ENCODE measurements at regions of chr2 and their contacts with region 1.

Region 1: DNA sequence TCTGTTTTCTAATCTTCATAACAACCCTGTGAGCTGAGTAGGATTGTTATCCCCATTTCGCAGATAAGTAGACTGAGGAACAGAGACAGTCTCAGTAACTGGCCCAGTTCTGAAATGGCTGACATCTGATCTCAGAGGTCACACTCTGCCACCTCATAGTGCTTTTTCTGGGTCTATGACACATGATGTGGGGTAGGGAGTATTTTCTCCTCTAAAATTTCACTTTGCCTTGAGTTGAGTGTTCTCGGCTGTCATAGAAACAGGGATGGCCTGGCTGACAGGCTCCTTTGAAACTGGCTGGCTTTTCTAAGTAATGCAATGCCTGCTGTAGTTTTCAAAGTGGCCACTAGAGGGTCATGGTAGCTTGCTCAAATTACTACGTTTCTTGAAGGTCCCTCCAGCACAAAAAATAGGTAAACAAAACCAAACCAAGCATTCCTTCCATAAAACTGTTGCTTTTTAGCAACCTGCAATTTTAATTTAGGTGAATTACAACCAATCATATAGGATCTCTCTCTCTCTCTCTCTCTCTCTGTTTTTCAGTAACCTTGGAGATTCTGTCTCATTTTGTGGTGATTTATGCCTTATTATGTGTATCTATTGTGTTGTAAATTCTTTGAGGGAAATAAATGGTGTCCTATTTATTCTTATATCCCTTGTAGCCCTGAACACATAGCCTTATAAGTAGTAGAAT is 84.2 kb upstream of the TTN start:
- DNase-seq: peak; percentile 9 to 65 (median 49)
- ATAC-seq: peak; percentile 83
- H3K4me3 ChIP-seq: no peak overlapping the region
- H3K4me3 Mint-ChIP-seq: no peak overlapping the region
- H3K27ac ChIP-seq: no peak overlapping the region
- H3K27ac Mint-ChIP-seq: no peak overlapping the region
- H3K4me1 ChIP-seq: no peaks in the 10 kb centered on the region
- H3K4me1 Mint-ChIP-seq: peaks cover 5 to 17% (median 7%) of the 10 kb centered on the region in 7 donors
- H3K27me3 ChIP-seq: no peaks in the 10 kb centered on the region
- H3K27me3 Mint-ChIP-seq: no peaks in the 10 kb centered on the region

Region 2: DNA sequence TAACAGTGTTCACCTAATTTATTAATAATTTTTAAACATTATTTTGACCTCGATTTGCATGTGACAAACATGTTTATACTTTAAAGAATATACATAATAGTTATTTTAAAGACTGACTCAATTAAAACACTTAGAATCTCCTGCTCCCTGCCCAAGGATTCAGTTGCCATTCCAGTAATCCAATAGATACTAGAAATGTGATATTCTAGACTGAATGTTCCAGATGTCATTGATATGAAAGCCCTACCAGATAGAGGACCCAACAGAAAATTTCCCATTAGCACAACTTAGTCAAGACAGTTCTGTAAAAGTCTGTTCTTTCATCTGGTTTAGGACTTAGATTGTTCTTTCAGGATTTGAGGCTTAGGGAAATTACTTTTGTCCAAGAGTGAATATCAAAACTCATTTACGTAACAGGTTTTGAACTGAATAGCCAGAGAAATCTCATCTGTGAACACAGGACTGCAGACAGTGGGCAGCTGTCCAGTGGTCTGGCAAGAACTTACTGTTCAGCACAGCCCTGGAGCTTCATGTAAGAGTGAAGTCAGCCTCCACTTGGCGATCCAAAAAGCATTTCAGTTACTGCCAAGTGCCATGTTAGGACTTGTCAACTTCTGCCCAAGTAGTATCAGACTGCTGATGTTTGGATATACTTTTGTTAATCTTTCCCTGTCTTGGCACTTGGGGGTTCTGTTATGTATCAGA is 619.6 kb before region 1 on chr2:
- CTCF ChIA-PET with region 1: no interaction called
- POLR2A ChIA-PET with region 1: no interaction called
- intact Hi-C with region 1: no loop called
- DNase-seq: no peak
- ATAC-seq: no peak
- H3K4me3 ChIP-seq: no peak overlapping the region
- H3K4me3 Mint-ChIP-seq: no peak overlapping the region
- H3K27ac ChIP-seq: no peak overlapping the region
- H3K27ac Mint-ChIP-seq: no peak overlapping the region
- H3K4me1 ChIP-seq: no peaks in the 10 kb centered on the region
- H3K4me1 Mint-ChIP-seq: no peaks in the 10 kb centered on the region
- H3K27me3 ChIP-seq: no peaks in the 10 kb centered on the region
- H3K27me3 Mint-ChIP-seq: peaks cover 7 to 14% (median 9%) of the 10 kb centered on the region in 5 donors

Region 3: DNA sequence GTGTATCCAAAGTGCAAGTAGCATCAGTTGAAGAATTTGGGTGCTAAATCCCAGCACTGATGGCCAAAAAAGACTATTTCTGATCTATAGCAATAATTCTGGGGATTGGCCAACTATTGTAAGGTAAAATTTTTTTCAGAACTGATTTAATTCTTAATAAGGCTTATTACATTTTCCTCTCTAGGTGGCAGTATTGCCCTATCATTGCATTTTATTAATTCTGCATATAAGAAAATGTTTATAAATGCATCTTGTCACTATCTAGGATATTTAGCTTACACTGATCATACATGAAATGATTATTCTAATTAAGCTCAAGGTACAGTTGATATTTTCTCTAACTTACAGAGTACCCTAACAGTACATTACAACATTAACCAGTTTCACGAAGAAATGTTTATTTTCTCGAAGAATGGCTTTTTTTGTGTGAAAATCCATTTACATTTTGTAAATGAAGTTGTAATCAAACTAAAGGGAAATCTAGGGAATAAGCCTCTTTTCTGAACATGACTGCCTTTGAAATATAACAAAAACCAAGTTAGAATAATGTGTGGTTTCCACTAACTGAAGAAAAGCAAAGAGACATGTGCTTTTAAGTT is 95.2 kb before region 1 on chr2:
- CTCF ChIA-PET with region 1: interaction called, 3 read pairs
- POLR2A ChIA-PET with region 1: no interaction called
- intact Hi-C with region 1: loop called in 1 of 2 experiments (anchors 5 kb)
- DNase-seq: peak in 5 of 9 donors; percentile 27 to 33 (median 28)
- ATAC-seq: no peak
- H3K4me3 ChIP-seq: no peak overlapping the region
- H3K4me3 Mint-ChIP-seq: no peak overlapping the region
- H3K27ac ChIP-seq: no peak overlapping the region
- H3K27ac Mint-ChIP-seq: no peak overlapping the region
- H3K4me1 ChIP-seq: no peaks in the 10 kb centered on the region
- H3K4me1 Mint-ChIP-seq: no peaks in the 10 kb centered on the region
- H3K27me3 ChIP-seq: no peaks in the 10 kb centered on the region
- H3K27me3 Mint-ChIP-seq: no peaks in the 10 kb centered on the region

Region 4: DNA sequence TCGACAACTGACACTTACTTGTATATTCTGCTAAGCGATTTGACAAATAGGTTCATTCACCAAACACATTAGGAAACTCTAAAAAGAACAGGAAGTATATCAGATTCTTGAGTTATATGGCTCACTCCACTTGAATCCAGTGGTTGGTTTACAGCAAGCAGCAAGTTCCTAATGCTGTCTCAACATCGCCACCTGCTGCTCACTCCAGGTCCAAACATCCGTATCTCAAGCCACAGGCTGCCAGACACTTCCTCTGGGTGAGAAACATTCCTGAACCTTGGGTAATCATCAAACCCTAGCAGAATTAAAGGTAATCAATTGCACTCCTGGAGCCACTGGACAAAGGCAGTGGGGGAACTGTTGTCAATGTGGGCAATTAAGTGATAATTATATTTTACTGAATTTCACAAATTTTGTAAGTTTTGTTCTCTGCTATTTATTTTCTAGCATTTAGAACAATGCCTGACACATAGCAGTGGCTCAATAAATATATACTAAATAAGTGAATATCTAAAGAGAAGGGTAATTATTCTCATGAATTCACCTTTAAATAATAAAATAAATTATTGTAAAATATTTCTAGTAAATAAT is 22.9 kb after region 1 on chr2:
- CTCF ChIA-PET with region 1: interaction called, 6 read pairs
- POLR2A ChIA-PET with region 1: interaction called, 4 read pairs
- intact Hi-C with region 1: loop called (anchors 1 kb)
- DNase-seq: peak; percentile 32 to 67 (median 59)
- ATAC-seq: peak; percentile 90
- H3K4me3 ChIP-seq: no peak overlapping the region
- H3K4me3 Mint-ChIP-seq: no peak overlapping the region
- H3K27ac ChIP-seq: no peak overlapping the region
- H3K27ac Mint-ChIP-seq: no peak overlapping the region
- H3K4me1 ChIP-seq: no peaks in the 10 kb centered on the region
- H3K4me1 Mint-ChIP-seq: peaks cover 0 to 17% (median 4%) of the 10 kb centered on the region in 7 donors
- H3K27me3 ChIP-seq: no peaks in the 10 kb centered on the region
- H3K27me3 Mint-ChIP-seq: no peaks in the 10 kb centered on the region

Region 5: GRCh38 chr2:179340668-179341067 is 449.3 kb after region 1 on chr2:
- CTCF ChIA-PET with region 1: no interaction called
- POLR2A ChIA-PET with region 1: no interaction called
- intact Hi-C with region 1: loop called in 1 of 2 experiments (anchors 1 kb)
- DNase-seq: no peak
- ATAC-seq: no peak
- H3K4me3 ChIP-seq: no peak overlapping the region
- H3K4me3 Mint-ChIP-seq: no peak overlapping the region
- H3K27ac ChIP-seq: no peak overlapping the region
- H3K27ac Mint-ChIP-seq: no peak overlapping the region
- H3K4me1 ChIP-seq: no peaks in the 10 kb centered on the region
- H3K4me1 Mint-ChIP-seq: no peaks in the 10 kb centered on the region
- H3K27me3 ChIP-seq: no peaks in the 10 kb centered on the region
- H3K27me3 Mint-ChIP-seq: peaks cover 0 to under 1% (median 0%) of the 10 kb centered on the region in 5 donors

Region 6: DNA sequence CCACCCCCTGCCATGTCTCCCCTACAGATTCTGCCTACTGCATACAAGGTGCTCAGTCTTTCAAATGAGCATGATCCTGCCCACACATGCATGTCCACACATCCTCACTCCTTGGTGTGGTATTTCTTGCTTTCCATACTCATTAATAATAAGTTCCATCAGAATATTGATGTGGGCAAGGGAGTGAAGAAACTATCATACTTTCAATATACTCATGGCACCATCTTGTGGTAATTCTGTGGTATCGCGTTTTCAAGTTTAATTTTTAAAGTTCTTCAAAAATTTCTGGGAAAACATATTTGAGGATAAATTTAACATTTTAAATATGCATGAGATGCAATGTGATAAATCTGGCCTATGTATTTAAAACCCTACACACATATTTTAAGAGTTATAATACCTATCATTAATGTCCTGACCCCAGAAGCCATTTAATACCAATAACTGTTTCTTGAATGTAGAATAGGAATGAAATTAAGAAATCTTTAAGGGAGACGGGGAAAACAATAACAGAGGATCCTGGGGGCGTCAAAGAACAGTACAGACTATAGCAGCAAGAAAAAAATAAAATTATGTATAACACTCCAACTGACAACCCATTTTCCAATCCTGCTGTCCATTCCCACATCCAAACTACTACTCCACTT is 859.9 kb after region 1 on chr2:
- CTCF ChIA-PET with region 1: no interaction called
- POLR2A ChIA-PET with region 1: no interaction called
- intact Hi-C with region 1: loop called in 1 of 2 experiments (anchors 5 kb)
- DNase-seq: no peak
- ATAC-seq: no peak
- H3K4me3 ChIP-seq: no peak overlapping the region
- H3K4me3 Mint-ChIP-seq: no peak overlapping the region
- H3K27ac ChIP-seq: no peak overlapping the region
- H3K27ac Mint-ChIP-seq: no peak overlapping the region
- H3K4me1 ChIP-seq: no peaks in the 10 kb centered on the region
- H3K4me1 Mint-ChIP-seq: no peaks in the 10 kb centered on the region
- H3K27me3 ChIP-seq: no peaks in the 10 kb centered on the region
- H3K27me3 Mint-ChIP-seq: peaks cover 0 to 5% (median 0%) of the 10 kb centered on the region in 5 donors